Right ventricle myocardium inferior (tissue), 1 donor: ENCODE measurements at regions of chr2 and their contacts with region 1.

Region 1: DNA sequence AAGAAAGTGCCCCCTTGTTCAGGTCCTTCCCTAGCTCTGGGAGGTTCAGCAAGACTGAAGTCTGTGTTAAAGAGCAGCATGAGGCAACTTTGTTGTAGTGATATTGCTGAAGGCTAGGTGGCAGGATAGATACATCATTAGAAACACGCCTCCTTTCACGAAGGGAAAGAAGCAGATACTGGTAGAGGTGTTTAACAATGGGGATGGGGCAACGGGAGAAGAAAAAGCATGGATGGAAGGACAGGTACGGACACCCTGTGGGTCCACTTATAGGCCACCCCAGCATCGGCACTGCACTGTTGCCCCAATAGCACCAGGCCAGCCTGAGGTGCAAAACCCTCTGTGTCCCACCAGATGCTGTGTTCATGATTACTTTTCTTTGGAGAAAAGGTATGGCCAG is 3.5 kb upstream of the IGFBP5 start:
- DNase-seq: peak; percentile 65
- ATAC-seq: peak; percentile 41

Region 2: GRCh38 chr2:216735086-216735485 is 36.2 kb after region 1 on chr2:
- intact Hi-C with region 1: no loop called
- DNase-seq: no peak
- ATAC-seq: peak; percentile 67

Region 3: DNA sequence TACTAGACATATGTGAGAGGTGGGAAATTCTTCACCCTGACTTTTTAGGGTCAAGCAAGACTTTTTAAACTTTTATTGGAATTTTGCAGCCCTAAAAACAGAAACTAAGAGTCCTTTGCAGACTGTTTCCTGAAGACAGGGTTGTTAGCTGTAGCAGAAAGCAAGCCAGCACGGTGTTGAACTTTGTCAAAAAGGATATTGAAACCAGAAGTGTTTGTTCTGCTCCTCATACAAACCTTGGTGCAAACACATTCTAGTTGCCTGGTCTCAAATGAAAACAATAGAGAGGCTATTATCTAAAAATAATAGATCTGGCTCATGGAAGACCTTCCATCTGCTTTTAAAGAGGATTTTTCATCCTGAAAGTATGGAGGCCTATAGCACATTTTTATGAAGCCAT is 62.2 kb after region 1 on chr2:
- intact Hi-C with region 1: no loop called
- DNase-seq: no peak
- ATAC-seq: no peak

Region 4: DNA sequence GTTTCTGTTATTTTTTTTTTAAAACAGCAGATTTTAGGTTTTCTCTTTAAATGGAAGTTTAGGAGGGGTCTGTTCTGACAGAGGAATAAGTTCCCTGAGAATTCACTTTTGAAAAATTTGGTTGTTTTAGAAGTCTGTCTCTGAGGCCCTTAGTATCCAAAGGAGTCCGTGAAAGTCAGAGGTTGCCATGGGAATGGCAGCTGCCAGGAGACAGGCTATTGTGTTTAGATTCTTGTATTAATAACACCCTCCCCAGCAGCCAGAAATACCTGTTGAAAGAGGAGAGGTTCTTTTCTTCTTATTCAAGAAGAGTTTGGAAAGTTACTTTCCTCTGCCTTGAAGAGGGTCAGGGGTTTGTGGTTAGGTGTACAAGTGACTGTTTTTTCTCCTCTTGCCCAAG is 131.5 kb after region 1 on chr2:
- intact Hi-C with region 1: loop called (anchors 5 kb)
- DNase-seq: no peak
- ATAC-seq: no peak

Region 5: DNA sequence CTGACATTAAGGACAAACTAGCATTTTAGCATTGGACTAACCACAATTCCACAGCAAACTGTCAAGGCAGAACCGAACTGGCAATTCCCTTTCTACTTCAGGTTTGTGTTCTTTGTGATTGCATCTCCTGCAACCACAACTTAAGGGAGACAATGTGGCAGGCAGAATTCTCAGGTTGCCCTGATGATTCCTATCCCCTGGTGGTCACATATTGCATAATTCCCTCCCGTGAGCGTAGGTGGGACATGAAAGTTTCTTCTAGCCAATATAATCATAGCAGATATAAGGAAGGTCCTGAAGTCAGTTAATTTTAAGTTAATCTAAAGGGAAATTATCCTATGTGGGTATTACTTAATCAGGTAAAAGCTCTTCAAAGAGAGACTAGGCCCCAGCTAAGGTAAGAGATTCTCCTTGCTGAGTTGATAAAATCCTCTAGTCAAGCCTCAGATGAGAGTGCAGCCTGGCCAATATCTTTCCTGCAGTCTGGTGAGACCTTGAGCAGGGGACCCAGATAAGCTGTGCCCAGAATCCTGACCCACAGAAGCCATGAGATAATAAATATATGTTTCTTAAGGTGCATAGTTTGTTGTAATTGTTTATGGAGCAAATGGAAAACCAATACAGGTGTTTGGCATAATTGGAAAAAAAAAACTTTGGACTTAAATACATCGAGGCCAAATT is 206.9 kb after region 1 on chr2:
- intact Hi-C with region 1: no loop called
- DNase-seq: no peak
- ATAC-seq: no peak

Region 6: DNA sequence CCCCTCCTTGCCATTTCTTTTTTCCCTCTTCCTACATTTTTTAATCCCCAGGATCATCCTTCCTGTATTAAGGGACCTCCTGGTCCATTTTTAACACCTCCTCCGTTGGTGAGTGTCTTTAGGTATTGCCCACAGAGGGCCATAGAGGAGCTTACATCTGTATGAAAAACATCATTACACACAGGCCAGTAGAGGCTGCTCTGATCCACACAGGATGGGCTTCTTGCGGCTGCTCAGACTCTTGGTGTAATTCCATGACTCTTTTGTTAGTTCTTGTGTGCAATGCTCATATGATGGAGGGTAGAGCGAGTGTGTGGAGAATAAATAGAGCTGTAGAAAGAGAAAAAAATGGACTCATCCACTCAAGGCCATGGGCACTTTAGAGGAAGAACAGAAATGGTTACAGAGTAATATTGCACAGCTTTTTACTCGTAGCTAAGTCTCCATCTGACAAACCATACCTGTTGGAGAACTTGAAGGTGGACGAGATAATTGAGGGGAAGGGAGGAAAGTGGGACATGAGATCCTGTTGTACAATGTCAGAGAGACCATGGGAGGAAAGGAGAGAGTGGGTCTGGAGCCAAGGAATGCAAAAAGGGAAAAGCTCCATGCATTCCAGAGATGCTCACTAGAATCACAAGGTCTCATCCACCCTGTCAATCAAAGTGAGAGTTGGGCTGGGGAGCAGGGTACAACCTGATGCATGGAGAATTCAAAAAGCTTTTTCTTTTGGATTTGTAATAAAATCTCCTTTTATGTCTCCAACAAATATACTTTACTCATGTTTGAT is 290.6 kb after region 1 on chr2:
- intact Hi-C with region 1: loop called (anchors 5 kb)
- DNase-seq: no peak
- ATAC-seq: no peak

Region 7: GRCh38 chr2:217166241-217166850 is 467.5 kb after region 1 on chr2:
- intact Hi-C with region 1: loop called (anchors 1 kb)
- DNase-seq: no peak
- ATAC-seq: peak; percentile 68

Region 8: DNA sequence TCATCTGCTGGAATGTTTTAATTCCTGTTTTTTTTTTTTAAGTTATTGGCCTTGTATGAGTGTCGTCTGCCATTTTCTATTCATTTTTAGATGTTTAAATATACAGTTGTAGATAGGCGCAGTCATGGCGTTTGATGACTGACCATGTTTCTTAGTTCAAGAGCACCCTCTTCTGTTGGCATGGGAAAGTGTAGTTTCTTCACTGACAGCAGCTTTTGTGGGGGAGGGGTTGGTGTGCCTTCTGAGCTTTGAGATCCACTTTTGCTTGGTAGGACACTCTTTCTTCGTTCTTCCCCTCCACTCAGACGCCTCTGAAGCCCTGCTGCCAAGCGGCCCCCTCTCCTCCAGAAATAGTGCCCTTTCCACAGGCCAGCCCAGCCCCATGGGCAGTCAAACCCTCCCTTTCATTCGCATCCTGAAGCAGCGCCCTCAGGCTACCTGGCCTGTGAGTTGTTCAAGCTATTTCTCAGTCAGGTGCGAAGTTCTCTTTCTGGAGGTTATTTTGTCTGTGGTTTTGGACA is 811.9 kb after region 1 on chr2:
- intact Hi-C with region 1: loop called (anchors 5 kb)
- DNase-seq: no peak
- ATAC-seq: peak; percentile 84